CD8-positive, alpha-beta T cell (primary cell): ENCODE measurements at regions of chr6 and their contacts with region 1.

Region 1: GRCh38 chr6:143427109-143427817 is 23.2 kb downstream of the ADAT2 start:
- DNase-seq: peak; percentile 42 to 81 (median 72)
- ATAC-seq: peak; percentile 100
- H3K4me3 ChIP-seq: no peak overlapping the region
- H3K4me3 Mint-ChIP-seq: no peak overlapping the region
- H3K27ac ChIP-seq: no peak overlapping the region
- H3K27ac Mint-ChIP-seq: no peak overlapping the region
- H3K4me1 ChIP-seq: no peaks in the 10 kb centered on the region
- H3K4me1 Mint-ChIP-seq: peaks cover 2% of the 10 kb centered on the region
- H3K27me3 ChIP-seq: no peaks in the 10 kb centered on the region
- H3K27me3 Mint-ChIP-seq: no peaks in the 10 kb centered on the region
- CTCF ChIP-seq: peak; percentile 95

Region 2: GRCh38 chr6:142566628-142567396 is 860.5 kb before region 1 on chr6:
- CTCF ChIA-PET with region 1: interaction called, 10 read pairs
- POLR2A ChIA-PET with region 1: no interaction called
- intact Hi-C with region 1: loop called (anchors 1 to 2 kb)
- DNase-seq: peak; percentile 22 to 72 (median 58)
- ATAC-seq: peak; percentile 57
- H3K4me3 ChIP-seq: no peak overlapping the region
- H3K4me3 Mint-ChIP-seq: no peak overlapping the region
- H3K27ac ChIP-seq: no peak overlapping the region
- H3K27ac Mint-ChIP-seq: no peak overlapping the region
- H3K4me1 ChIP-seq: peaks cover 47% of the 10 kb centered on the region
- H3K4me1 Mint-ChIP-seq: peaks cover 61% of the 10 kb centered on the region
- H3K27me3 ChIP-seq: no peaks in the 10 kb centered on the region
- H3K27me3 Mint-ChIP-seq: no peaks in the 10 kb centered on the region
- CTCF ChIP-seq: peak; percentile 75

Region 3: GRCh38 chr6:142952614-142953013 is 474.6 kb before region 1 on chr6:
- CTCF ChIA-PET with region 1: no interaction called
- POLR2A ChIA-PET with region 1: no interaction called
- intact Hi-C with region 1: loop called (anchors 5 kb)
- DNase-seq: peak in 1 of 9 experiments; percentile 24
- ATAC-seq: no peak
- H3K4me3 ChIP-seq: no peak overlapping the region
- H3K4me3 Mint-ChIP-seq: no peak overlapping the region
- H3K27ac ChIP-seq: no peak overlapping the region
- H3K27ac Mint-ChIP-seq: peak overlapping the region; percentile 79
- H3K4me1 ChIP-seq: no peaks in the 10 kb centered on the region
- H3K4me1 Mint-ChIP-seq: peaks cover 18% of the 10 kb centered on the region
- H3K27me3 ChIP-seq: no peaks in the 10 kb centered on the region
- H3K27me3 Mint-ChIP-seq: no peaks in the 10 kb centered on the region
- CTCF ChIP-seq: no peak

Region 4: DNA sequence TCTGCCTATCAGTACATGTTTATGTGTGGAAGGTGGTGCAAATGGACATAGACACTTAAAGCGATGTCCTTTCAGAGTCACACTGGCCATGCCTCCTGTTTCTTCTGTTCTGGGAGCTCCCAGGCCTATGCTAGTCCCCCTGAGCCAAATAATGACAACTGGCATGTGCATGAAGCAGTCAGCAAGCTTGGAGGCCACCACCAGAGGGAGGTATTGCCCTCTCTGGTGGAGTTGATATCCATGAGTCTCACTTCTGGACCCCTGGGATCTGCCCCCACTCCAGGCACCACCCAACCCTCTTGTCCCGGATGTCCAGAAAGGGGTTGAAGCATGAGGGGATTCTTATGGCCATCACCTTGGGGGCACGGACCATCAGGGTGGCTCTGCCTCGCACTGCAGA is 194.4 kb before region 1 on chr6:
- CTCF ChIA-PET with region 1: interaction called, 3 read pairs
- POLR2A ChIA-PET with region 1: no interaction called
- intact Hi-C with region 1: loop called (anchors 2 kb)
- DNase-seq: peak in 4 of 9 experiments; percentile 1 to 35 (median 20)
- ATAC-seq: no peak
- H3K4me3 ChIP-seq: no peak overlapping the region
- H3K4me3 Mint-ChIP-seq: no peak overlapping the region
- H3K27ac ChIP-seq: no peak overlapping the region
- H3K27ac Mint-ChIP-seq: no peak overlapping the region
- H3K4me1 ChIP-seq: no peaks in the 10 kb centered on the region
- H3K4me1 Mint-ChIP-seq: no peaks in the 10 kb centered on the region
- H3K27me3 ChIP-seq: no peaks in the 10 kb centered on the region
- H3K27me3 Mint-ChIP-seq: no peaks in the 10 kb centered on the region
- CTCF ChIP-seq: no peak